GM23248 (cell line): ENCODE measurements at regions of chr17 and their contacts with region 1.

Region 1: DNA sequence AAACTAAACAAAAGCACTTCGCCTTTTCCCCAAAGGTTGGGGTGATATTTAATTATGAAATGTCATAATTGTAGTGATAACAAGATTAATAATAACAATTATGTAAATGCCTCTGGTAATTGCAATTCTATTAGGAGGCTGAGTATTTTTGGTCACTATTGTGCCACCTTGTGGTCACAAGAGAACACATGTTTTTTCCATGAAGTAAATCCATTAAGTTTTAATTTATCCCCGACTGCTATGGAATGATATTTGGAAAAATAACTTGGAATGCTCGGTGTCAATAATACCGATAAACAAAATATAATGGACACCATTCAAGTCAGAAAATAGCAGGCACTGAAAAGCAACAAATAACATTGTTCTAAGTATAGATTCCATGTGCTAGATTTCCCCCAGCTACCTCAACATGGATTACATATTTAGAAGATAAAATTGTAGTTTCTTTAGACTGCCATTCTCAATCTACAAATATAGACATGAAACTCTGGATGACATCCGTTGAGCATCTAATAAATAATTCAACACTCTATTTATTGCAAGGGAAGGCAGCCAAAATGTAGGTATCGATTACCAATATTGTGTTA is 25.0 kb upstream of the KCNJ2 start:
- DNase-seq: peak; percentile 56
- H3K4me3 ChIP-seq: no peak overlapping the region
- H3K27ac ChIP-seq: no peak overlapping the region
- H3K4me1 ChIP-seq: no peaks in the 10 kb centered on the region
- H3K27me3 ChIP-seq: no peaks in the 10 kb centered on the region

Region 2: GRCh38 chr17:69575346-69575761 is 569.0 kb before region 1 on chr17:
- in situ Hi-C with region 1: loop called (anchors 10 kb)
- DNase-seq: peak; percentile 47
- H3K4me3 ChIP-seq: no peak overlapping the region
- H3K27ac ChIP-seq: no peak overlapping the region
- H3K4me1 ChIP-seq: peaks cover 21% of the 10 kb centered on the region
- H3K27me3 ChIP-seq: no peaks in the 10 kb centered on the region

Region 3: DNA sequence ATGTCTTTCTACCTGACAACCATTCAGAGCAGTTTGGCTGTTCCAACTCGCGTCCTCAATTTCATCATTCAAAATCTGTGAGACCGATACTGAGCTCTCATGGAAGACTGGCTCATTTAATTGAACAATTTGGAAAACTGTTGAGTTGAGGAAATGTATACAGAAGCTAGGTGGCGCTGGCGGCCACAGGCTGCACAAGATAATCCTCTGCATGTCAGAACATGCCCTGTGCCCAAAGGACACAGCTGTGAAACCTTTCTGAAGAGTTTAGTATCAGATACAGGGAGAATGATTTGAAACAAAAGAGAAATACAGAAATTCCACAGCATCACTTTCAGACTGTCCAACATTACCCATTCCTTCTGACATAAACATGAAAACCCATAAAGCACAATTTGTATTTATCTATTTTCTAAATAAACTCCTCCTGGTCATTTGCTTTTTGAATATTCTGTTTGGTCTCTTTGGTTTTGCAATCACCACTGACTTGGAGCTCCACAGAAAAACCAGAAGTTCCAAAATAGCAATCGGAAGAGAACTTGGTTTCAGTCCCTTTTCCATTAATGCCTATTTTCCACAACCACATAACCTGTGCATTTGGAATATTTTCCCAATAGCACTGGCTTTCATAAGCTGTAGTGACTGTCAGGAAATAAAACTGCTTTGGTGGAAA is 537.1 kb before region 1 on chr17:
- in situ Hi-C with region 1: loop called (anchors 10 kb)
- DNase-seq: peak; percentile 87
- H3K4me3 ChIP-seq: no peak overlapping the region
- H3K27ac ChIP-seq: peak overlapping the region; percentile 83
- H3K4me1 ChIP-seq: peaks cover 37% of the 10 kb centered on the region
- H3K27me3 ChIP-seq: no peaks in the 10 kb centered on the region

Region 4: DNA sequence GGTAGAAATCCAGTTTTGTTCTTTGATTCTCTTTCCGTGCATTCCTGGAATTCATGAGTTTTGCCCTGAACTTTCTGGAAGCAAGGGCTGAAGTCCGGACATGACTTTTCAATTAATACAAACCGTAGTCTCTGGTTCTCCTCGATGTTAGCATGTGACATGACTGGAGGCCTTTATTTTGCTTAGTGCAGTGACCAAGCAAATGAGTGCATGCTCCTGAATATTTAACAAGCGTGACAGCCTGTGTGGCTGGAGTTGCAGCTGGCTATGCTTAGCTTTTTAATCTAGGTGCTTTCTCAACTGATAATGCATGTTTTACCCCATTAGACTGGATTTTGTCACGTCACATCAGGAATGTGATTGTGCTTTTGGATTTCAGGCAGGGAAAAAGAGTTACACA is 427.8 kb before region 1 on chr17:
- in situ Hi-C with region 1: no loop called
- DNase-seq: peak; percentile 53
- H3K4me3 ChIP-seq: no peak overlapping the region
- H3K27ac ChIP-seq: 0 out of 2 replicates have a peak overlapping the region, but pooled peaks have one; percentile 4
- H3K4me1 ChIP-seq: peaks cover 9% of the 10 kb centered on the region
- H3K27me3 ChIP-seq: no peaks in the 10 kb centered on the region

Region 5: DNA sequence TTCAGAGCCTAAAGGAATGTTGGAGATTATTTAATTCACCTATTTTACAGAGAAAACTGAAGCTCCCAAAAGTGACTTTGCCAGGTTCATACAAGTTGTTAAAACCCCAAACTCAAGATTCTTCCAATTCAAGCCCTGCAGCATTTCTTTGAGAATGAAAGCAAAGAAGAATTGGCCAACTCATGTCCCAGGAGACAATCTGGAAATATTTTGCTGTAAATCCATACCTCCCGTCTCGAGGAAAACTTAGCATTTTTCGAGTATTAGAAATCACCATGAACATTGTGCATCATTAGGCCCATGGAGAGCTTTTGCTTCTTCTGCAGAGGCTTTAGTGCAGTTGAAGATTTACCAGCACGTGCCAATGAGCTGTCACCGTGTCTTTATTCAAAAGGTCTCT is 245.8 kb before region 1 on chr17:
- in situ Hi-C with region 1: no loop called
- DNase-seq: peak; percentile 14
- H3K4me3 ChIP-seq: no peak overlapping the region
- H3K27ac ChIP-seq: no peak overlapping the region
- H3K4me1 ChIP-seq: peaks cover 7% of the 10 kb centered on the region
- H3K27me3 ChIP-seq: no peaks in the 10 kb centered on the region

Region 6: DNA sequence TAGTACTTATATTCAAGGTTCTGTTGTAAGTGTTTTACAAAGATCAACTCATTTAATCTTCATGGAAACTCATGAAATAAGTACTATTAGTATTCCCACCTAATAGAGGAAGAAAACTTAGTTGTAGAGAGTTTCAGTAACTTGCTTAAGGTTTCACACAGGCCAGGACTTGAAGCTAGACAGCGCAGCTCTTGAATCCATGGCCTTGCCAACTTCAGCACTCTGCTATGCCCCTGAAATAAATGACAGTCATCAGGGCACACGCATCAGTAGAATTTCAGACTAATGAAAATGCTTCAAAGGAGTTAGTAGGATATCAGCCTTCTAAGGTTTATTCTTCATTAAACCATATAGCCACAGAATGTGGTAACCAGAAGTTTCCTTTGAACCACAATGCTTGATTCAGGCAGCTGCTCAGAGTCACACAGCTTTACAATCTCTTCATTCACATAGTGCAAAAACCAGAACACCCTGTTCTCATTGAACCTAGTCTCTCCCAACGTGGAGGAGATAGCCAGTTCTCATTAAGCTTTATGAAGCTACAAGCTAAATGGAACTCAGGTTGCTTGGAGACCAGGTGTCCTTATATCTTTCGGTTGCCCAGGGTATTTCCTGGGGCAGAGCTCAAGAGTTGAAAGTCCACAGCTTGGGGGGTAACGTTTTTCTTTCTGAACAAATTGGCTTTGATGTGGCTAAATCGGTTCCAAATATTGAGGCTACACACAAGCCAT is 64.6 kb after region 1 on chr17:
- in situ Hi-C with region 1: no loop called
- DNase-seq: no peak
- H3K4me3 ChIP-seq: no peak overlapping the region
- H3K27ac ChIP-seq: no peak overlapping the region
- H3K4me1 ChIP-seq: no peaks in the 10 kb centered on the region
- H3K27me3 ChIP-seq: no peaks in the 10 kb centered on the region

Region 7: GRCh38 chr17:70329721-70330120 is 185.4 kb after region 1 on chr17:
- in situ Hi-C with region 1: no loop called
- DNase-seq: no peak
- H3K4me3 ChIP-seq: no peak overlapping the region
- H3K27ac ChIP-seq: no peak overlapping the region
- H3K4me1 ChIP-seq: no peaks in the 10 kb centered on the region
- H3K27me3 ChIP-seq: no peaks in the 10 kb centered on the region